BJ (cell line): ENCODE measurements at regions of chr17 and their contacts with region 1.

Region 1: GRCh38 chr17:69733171-69734012 is 318.9 kb downstream of the MAP2K6 start:
- DNase-seq: no peak
- H3K4me3 ChIP-seq: no peak overlapping the region
- H3K27me3 ChIP-seq: no peaks in the 10 kb centered on the region
- CTCF ChIP-seq: no peak

Region 2: GRCh38 chr17:69388822-69389442 is 344.5 kb before region 1 on chr17:
- CTCF ChIA-PET with region 1: no interaction called
- POLR2A ChIA-PET with region 1: interaction called, 13 read pairs
- DNase-seq: no peak
- H3K4me3 ChIP-seq: no peak overlapping the region
- H3K27me3 ChIP-seq: no peaks in the 10 kb centered on the region
- CTCF ChIP-seq: no peak